Head of caudate nucleus (tissue), 42 donors: ENCODE measurements at regions of chr2 and their contacts with region 1.

Region 1: GRCh38 chr2:192194866-192195547 is at the start of gene TMEFF2:
- DNase-seq: peak; percentile 98 to 100 (median 100)

Region 2: GRCh38 chr2:191811807-191812602 is 383.0 kb before region 1 on chr2:
- intact Hi-C with region 1: loop called (anchors 2 kb)
- DNase-seq: peak; percentile 40 to 90 (median 78)

Region 3: DNA sequence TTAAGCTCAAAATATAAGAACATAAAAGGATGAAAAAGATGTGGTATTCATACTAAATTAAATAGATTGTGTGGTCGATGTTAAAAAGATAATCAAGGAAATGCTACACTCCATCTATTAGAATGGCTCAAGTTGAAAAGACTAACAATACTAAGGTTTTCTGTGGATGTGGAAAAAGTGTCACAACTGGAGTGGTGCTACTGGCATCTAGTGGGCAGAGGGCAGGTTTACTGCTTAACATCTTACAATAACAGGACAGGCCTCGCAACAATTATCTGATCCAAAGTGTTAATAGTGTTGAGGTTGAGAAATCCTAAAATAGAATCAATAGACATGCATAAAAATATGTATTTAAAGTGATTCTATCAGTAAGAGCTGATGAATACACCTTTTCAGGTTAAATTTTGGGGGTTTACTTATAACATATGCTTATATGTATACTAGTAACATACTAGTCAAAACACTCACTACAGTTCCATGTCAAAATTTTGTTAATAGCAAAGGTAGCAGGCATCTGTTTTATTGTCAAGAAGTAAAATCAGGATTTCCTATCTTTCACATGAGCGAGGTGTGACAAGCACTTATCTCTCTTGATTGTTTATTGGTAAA is 91.2 kb after region 1 on chr2:
- intact Hi-C with region 1: loop called (anchors 5 kb)
- DNase-seq: peak in 34 of 42 donors; percentile 6 to 81 (median 49)

Region 4: DNA sequence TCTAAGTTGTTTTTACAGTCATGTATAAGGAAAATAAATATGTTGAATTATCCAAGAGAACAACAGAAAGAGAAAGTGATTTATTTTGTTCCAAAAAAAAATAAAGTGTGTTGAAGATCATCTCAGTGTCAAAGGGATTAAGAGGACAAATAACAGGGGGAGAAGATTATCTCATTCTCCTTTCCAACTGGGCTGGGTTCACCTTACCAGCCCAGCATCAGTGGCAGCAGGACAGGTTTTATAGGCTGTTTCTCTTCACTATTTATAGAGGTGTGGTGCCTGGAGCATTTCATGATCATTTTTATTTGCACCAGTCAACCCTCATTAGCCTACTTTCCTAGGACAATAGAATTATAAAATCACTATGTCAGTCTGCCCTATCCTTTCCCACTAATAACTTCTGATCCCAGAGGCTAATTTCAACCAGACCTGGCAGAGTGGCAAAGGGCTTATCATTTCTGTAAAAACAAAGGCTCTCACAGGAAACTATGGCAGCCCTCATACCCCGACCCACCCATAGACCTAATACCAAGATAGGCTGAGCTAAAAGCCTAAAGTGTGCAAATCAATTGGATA is 243.1 kb after region 1 on chr2:
- intact Hi-C with region 1: no loop called
- DNase-seq: no peak